Astrocyte of the cerebellum (primary cell): ENCODE measurements at regions of chr1 and their contacts with region 1.

Region 1: GRCh38 chr1:241679961-241680360 is 27.9 kb downstream of the WDR64 start:
- DNase-seq: no peak
- H3K4me3 ChIP-seq: no peak overlapping the region
- CTCF ChIP-seq: no peak

Region 2: DNA sequence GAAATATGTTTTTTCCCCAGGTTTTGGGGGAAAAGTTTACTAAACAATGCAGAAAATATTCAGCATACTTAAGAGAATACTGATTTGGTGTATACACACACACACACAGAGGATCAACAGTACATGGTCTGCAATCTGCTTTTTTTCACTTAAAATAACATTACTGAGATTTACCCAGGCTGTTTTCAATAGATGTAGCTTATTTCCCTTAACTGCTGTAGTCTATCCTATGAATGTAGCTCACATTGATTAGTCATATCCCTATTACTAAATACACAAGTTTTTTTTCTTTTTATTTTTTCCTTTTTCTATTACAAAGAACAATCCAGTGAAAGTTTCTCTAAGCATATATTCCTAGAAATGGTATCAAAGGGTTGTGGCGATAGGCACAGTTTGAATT is 801.3 kb before region 1 on chr1:
- in situ Hi-C with region 1: no loop called
- DNase-seq: no peak
- H3K4me3 ChIP-seq: no peak overlapping the region
- CTCF ChIP-seq: no peak

Region 3: GRCh38 chr1:241622669-241623068 is 57.3 kb before region 1 on chr1:
- in situ Hi-C with region 1: no loop called
- DNase-seq: no peak
- H3K4me3 ChIP-seq: no peak overlapping the region
- CTCF ChIP-seq: no peak

Region 4: DNA sequence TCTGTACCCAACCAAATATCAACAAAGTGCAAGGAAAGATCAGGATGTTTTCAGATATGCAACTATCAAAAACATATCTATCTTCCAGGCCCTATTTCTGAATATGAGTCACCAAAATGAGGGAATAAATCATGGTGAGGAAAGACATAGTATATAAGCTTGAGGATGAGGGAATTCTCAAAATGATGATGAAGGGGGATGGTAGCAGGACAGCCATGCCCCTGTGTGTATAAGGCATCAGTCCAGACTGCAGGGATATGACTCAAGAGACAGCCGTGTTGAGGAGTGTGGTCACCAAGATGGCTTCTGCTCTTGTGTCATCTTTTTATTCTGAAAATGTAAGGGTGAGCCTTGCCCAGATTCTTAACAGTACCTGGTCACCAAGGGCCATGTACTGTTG is 32.3 kb before region 1 on chr1:
- in situ Hi-C with region 1: loop called (anchors 5 kb)
- DNase-seq: no peak
- H3K4me3 ChIP-seq: no peak overlapping the region
- CTCF ChIP-seq: no peak

Region 5: GRCh38 chr1:241918879-241919278 is 238.9 kb after region 1 on chr1:
- in situ Hi-C with region 1: no loop called
- DNase-seq: peak; percentile 16
- H3K4me3 ChIP-seq: no peak overlapping the region
- CTCF ChIP-seq: no peak